ENCODE measurements at regions of chr3 and their contacts with region 1.

Region 1: GRCh38 chr3:58217209-58217811 is 6.5 kb upstream of the DNASE1L3 start:
- DNase-seq: peak; percentile 84
- ATAC-seq: peak; percentile 95
- H3K4me3 ChIP-seq: peak overlapping the region in 1 of 3 experiments; percentile 53; a peak in 2 of 6 replicates
- H3K27ac ChIP-seq: peak overlapping the region; percentile 47
- H3K4me1 ChIP-seq: peaks cover 69% of the 10 kb centered on the region
- H3K27me3 ChIP-seq: no peaks in the 10 kb centered on the region
- CTCF ChIP-seq: peak; percentile 75
- EP300 ChIP-seq: 0 out of 4 replicates have a peak, but pooled peaks of 1 of the 2 experiments have one; percentile 1
- POLR2A ChIP-seq: no peak
- RAD21 ChIP-seq: peak; percentile 82

Region 2: DNA sequence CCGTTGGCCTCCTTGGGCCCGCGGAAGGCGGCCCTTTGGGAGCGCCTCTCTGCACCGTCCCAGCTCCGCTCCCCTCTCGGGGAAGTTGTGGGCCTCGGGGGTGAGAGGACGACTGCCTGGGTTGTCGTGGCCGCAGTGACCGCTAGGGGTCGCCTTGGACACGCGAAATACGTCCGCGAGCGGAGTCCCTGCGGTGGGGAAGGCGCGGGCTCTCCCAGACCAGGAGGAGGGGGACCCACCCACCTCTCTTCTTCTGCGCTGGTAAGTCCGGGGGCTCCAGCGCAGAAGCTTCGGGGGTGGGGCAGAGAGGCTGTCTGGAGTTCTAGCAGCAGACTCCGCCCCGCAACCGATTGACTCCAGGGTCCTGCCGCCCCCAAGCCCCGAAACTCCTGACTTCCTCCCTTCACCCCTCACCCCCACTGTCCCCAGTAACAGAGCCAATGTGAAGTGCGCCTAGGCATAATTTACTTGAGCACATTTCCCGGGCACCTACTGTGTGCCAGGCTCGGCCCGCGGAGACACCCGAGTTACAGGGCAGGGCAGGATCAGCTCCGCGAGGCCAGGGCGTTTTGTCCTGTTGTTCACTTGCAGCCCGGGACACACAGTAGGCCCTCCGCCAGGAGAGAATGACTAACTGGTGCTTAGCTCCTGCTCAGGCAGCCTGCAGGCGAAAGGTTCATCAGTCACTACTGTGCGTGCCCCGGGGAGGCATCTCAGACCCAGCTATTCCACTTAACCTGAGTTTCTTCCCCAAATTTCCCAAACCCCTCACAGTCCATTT is 39.4 kb before region 1 on chr3:
- CTCF ChIA-PET with region 1: interaction called, 3 read pairs
- POLR2A ChIA-PET with region 1: interaction called, 3 read pairs
- in situ Hi-C with region 1: loop called (anchors 5 kb)
- intact Hi-C with region 1: no loop called
- DNase-seq: peak; percentile 67
- ATAC-seq: peak; percentile 44
- H3K4me3 ChIP-seq: peak overlapping the region in 1 of 3 experiments; percentile 57; a peak in 3 of 6 replicates
- H3K27ac ChIP-seq: peak overlapping the region; percentile 32
- H3K4me1 ChIP-seq: peaks cover 100% of the 10 kb centered on the region
- H3K27me3 ChIP-seq: peaks cover 0 to 16% of the 10 kb centered on the region in 2 experiments; a peak in 2 of 5 replicates
- CTCF ChIP-seq: peak; percentile 97
- EP300 ChIP-seq: no peak
- POLR2A ChIP-seq: no peak
- RAD21 ChIP-seq: peak; percentile 86

Region 3: GRCh38 chr3:58188173-58188564 is 29.1 kb before region 1 on chr3:
- CTCF ChIA-PET with region 1: interaction called, 59 read pairs
- POLR2A ChIA-PET with region 1: interaction called, 15 read pairs
- in situ Hi-C with region 1: loop called (anchors 5 kb)
- intact Hi-C with region 1: loop called (anchors 1 kb)
- DNase-seq: no peak
- ATAC-seq: no peak
- H3K4me3 ChIP-seq: no peak overlapping the region
- H3K27ac ChIP-seq: peak overlapping the region; percentile 84
- H3K4me1 ChIP-seq: peaks cover 90% of the 10 kb centered on the region
- H3K27me3 ChIP-seq: no peaks in the 10 kb centered on the region
- CTCF ChIP-seq: no peak
- EP300 ChIP-seq: no peak
- POLR2A ChIP-seq: no peak
- RAD21 ChIP-seq: no peak

Region 4: DNA sequence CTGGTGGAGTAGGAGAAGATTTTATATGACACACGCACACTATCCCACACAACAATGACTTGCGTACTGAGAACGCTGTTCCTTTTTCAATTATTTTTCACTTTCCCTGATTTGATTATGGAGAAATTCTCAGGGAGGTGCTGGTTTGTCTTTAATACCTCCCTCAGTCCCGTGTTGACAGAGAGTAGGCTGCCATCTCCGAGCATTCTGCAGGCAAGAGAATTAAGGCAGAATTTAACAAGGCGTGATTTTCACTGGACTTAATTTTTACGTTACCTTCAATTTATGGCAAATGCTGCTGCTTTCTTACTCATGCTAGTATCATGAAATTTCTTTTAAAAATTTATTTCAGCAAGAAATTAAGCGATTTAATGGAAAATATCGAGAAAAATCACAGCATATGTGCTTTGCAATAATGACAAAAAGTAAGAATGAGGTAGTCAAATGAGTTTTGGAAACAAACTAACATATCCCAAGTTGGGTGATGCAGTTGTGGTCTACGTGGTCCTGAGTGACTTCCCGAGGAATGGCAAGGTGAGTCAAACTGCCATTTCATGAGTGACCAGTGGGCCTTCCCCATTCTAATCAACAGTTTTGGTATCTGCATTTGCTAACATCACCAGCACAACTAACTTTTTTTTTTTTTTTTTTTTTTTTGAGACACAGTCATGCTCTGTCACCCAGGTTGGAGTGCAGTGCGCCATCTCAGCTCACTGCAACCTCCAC is 23.5 kb before region 1 on chr3:
- CTCF ChIA-PET with region 1: interaction called, 59 read pairs
- POLR2A ChIA-PET with region 1: interaction called, 15 read pairs
- in situ Hi-C with region 1: no loop called
- intact Hi-C with region 1: loop called (anchors 1 kb)
- DNase-seq: no peak
- ATAC-seq: peak; percentile 20
- H3K4me3 ChIP-seq: peak overlapping the region in 1 of 3 experiments; percentile 38; a peak in 1 of 6 replicates
- H3K27ac ChIP-seq: peak overlapping the region; percentile 84
- H3K4me1 ChIP-seq: peaks cover 89% of the 10 kb centered on the region
- H3K27me3 ChIP-seq: no peaks in the 10 kb centered on the region
- CTCF ChIP-seq: no peak
- EP300 ChIP-seq: no peak
- POLR2A ChIP-seq: no peak
- RAD21 ChIP-seq: no peak

Region 5: GRCh38 chr3:58237238-58237940 is 20.1 kb after region 1 on chr3 and contains the start of gene ABHD6:
- CTCF ChIA-PET with region 1: no interaction called
- POLR2A ChIA-PET with region 1: interaction called, 3 read pairs
- in situ Hi-C with region 1: no loop called
- intact Hi-C with region 1: loop called (anchors 2 kb)
- DNase-seq: peak; percentile 40
- ATAC-seq: peak; percentile 84
- H3K4me3 ChIP-seq: peak within 1 kb of the TSS; percentile 89 to 95 (median 93)
- H3K27ac ChIP-seq: peak within 1 kb of the TSS; percentile 44
- H3K4me1 ChIP-seq: peaks cover 68% of the 10 kb centered on the region
- H3K27me3 ChIP-seq: peaks cover 1 to 11% of the 10 kb centered on the region in 2 experiments; a peak in 3 of 5 replicates
- CTCF ChIP-seq: peak; percentile 76
- EP300 ChIP-seq: no peak
- POLR2A ChIP-seq: peak in 1 of 2 experiments; percentile 61; a peak in 1 of 4 replicates
- RAD21 ChIP-seq: peak; percentile 83
- total RNA-seq, gene ABHD6: 5.7 and 9.0 TPM in 2 replicates

Region 6: DNA sequence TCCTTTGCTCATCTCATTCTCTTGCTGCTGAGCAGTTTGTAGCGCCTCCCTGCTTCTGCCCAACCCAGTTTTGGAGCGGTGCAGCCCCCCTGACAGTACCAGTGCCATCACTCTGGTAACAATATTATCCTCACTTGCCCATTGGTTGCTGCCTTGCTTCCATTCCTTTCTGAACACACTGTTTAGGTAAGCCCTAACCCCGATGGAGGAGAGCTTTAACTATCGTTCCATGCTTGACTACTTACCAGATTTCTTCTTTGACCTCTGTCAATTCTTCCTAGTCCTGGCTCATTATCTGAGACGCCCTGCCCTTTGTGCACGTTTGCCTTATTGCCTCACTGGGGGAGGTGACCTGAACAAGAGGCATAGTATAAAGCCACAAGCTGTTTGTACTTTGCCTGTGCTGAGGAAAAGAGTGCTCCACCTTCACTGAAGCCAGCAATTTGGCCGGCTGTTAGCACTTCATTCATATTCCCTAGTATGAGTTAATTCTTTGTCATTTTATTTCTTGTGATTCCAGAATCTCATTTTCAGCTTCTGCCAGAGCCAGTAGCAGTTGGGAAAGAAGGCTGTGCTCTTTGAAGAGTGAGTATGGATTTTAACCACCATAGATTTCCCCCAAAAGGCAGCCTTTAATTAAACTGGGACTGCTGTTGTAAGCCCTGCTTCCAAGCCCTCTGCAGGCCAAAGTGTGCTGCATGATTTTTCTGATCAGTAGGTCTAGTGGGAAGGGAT is 32.2 kb after region 1 on chr3:
- CTCF ChIA-PET with region 1: no interaction called
- POLR2A ChIA-PET with region 1: no interaction called
- in situ Hi-C with region 1: no loop called
- intact Hi-C with region 1: loop called (anchors 1 kb)
- DNase-seq: peak; percentile 78
- ATAC-seq: peak; percentile 93
- H3K4me3 ChIP-seq: peak overlapping the region; percentile 7 to 22 (median 22); a peak in 3 of 6 replicates
- H3K27ac ChIP-seq: peak overlapping the region; percentile 67
- H3K4me1 ChIP-seq: peaks cover 59% of the 10 kb centered on the region
- H3K27me3 ChIP-seq: no peaks in the 10 kb centered on the region
- CTCF ChIP-seq: no peak
- EP300 ChIP-seq: peak in 1 of 2 experiments; percentile 57; a peak in 1 of 4 replicates
- POLR2A ChIP-seq: 0 out of 4 replicates have a peak, but pooled peaks of 1 of the 2 experiments have one; percentile 35
- RAD21 ChIP-seq: no peak

Region 7: DNA sequence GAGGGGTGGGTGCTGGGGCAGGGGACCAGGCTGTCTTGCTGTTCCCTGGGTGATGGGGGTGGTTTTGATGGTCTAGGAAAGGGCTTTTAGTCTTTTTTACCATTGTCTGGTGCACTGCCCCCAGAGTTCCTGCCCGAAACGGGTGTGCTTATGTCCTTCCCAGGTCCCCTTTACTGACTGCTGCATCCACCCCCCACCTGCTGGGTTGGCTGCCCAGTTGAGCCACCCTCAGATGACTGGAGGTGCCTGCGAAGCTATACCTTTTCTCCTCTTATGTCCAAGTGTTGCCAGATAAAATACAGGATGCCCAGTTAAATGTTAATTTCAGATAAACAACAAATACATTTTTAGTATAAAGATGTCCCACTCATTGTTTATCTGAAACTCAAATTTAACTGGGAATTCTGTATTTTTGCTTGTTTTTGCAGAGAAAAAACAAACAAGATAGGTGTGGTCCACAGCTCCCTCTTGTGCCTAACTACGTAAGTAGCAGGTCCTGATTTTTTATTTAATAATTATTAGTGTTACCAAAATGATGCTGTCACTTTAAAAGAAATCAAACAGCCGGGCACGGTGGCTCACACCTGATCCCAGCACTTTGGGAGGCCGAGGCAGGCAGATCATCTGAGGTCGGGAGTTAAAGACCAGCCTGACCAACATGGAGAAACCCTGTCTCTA is 82.7 kb after region 1 on chr3:
- CTCF ChIA-PET with region 1: interaction called, 10 read pairs
- POLR2A ChIA-PET with region 1: no interaction called
- in situ Hi-C with region 1: no loop called
- intact Hi-C with region 1: loop called (anchors 1 kb)
- DNase-seq: peak; percentile 25
- ATAC-seq: no peak
- H3K4me3 ChIP-seq: no peak overlapping the region
- H3K27ac ChIP-seq: no peak overlapping the region
- H3K4me1 ChIP-seq: peaks cover 21% of the 10 kb centered on the region
- H3K27me3 ChIP-seq: 0 out of 5 replicates have a peak, but pooled peaks cover 0 to 3% of the 10 kb centered on the region in 2 experiments
- CTCF ChIP-seq: peak; percentile 66
- EP300 ChIP-seq: no peak
- POLR2A ChIP-seq: no peak
- RAD21 ChIP-seq: peak; percentile 63